CD8-positive, alpha-beta T cell (primary cell): ENCODE measurements at regions of chr9 and their contacts with region 1.

Region 1: DNA sequence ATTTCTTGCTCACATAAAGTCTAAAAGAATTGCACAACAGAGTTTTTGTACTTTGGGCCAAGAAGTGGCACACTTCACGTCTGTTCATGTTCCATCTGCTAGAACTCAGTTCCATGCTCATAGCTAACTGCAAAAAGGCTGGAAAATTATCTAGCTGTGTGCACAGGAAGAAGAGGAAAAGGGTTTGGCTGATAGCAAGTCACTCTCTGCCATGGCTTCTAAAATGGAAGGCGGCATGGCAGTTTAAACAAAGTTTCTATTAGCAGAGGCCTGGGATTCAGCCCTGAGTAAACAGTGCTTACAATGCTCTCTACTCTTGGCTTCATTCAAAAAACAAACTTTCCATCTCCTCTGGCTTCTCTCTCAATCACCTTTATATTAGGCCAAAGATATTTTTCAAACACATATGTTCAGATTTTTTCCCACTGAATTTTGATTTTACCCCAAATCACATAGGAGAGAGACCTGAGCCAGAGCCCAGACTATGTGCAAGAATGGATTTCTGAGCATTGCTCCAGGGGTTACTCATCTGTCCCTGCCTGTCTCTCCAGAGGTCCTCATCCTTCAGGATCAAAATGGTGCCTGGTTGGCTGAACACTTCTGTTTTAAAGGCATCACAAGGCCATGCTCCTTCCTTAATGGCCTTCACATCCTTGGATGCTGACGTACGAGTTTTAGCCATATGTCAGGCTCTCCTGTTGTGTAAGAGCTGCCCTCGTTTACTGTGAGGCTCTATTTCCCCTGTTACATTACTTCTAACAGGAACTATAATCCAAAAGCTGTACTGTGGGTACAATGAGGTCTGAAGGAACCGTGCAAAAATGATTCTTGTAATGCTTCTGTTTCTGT is 226.6 kb downstream of the SAXO1 start:
- DNase-seq: no peak
- ATAC-seq: no peak
- H3K4me3 ChIP-seq: no peak overlapping the region
- H3K4me3 Mint-ChIP-seq: no peak overlapping the region
- H3K27ac ChIP-seq: no peak overlapping the region
- H3K27ac Mint-ChIP-seq: no peak overlapping the region
- H3K4me1 ChIP-seq: no peaks in the 10 kb centered on the region
- H3K4me1 Mint-ChIP-seq: no peaks in the 10 kb centered on the region
- H3K27me3 ChIP-seq: no peaks in the 10 kb centered on the region
- H3K27me3 Mint-ChIP-seq: peaks cover under 1% of the 10 kb centered on the region
- CTCF ChIP-seq: no peak

Region 2: DNA sequence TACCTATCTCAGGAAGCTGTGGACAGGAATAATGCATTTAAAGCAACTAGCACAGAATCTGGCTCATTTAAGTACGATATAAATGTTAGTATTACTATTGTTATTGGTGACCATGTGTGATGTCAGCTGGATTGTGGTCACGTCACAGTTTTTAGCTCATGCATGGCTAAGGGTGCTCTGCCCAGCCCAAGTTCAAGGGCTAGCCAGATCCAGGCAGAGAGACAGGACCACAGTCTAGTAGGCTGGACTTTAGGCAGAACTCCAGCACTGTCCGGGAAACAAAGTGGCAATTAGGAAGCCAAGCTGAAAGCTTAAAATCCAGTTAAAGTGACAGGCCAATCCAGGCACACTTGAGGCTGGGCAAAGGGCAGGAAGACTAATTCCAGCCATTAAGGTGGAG is 58.9 kb before region 1 on chr9:
- CTCF ChIA-PET with region 1: no interaction called
- POLR2A ChIA-PET with region 1: no interaction called
- intact Hi-C with region 1: loop called in 1 of 2 experiments (anchors 10 kb)
- DNase-seq: no peak
- ATAC-seq: no peak
- H3K4me3 ChIP-seq: no peak overlapping the region
- H3K4me3 Mint-ChIP-seq: no peak overlapping the region
- H3K27ac ChIP-seq: no peak overlapping the region
- H3K27ac Mint-ChIP-seq: no peak overlapping the region
- H3K4me1 ChIP-seq: no peaks in the 10 kb centered on the region
- H3K4me1 Mint-ChIP-seq: no peaks in the 10 kb centered on the region
- H3K27me3 ChIP-seq: no peaks in the 10 kb centered on the region
- H3K27me3 Mint-ChIP-seq: peaks cover 3% of the 10 kb centered on the region
- CTCF ChIP-seq: no peak

Region 3: DNA sequence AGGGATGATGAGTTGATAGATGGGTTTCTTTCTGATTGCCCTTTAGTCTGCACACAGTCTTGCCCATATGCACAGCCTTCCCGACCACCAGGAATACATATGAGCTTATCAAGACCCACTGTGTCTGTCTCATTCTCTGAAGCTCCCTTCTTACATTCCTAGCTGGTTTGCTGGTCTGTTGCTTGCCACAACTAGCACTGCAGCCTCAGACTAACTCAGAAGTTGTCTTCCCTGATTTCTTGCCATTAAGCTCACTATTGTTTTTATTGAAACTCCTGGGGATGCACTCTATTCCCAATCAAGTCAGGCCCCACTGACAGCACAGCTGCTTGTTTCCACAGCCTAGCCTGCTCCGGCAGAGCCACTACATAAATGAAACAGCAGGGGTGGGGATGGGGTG is 129.1 kb after region 1 on chr9:
- CTCF ChIA-PET with region 1: no interaction called
- POLR2A ChIA-PET with region 1: no interaction called
- intact Hi-C with region 1: no loop called
- DNase-seq: no peak
- ATAC-seq: no peak
- H3K4me3 ChIP-seq: no peak overlapping the region
- H3K4me3 Mint-ChIP-seq: no peak overlapping the region
- H3K27ac ChIP-seq: no peak overlapping the region
- H3K27ac Mint-ChIP-seq: no peak overlapping the region
- H3K4me1 ChIP-seq: no peaks in the 10 kb centered on the region
- H3K4me1 Mint-ChIP-seq: no peaks in the 10 kb centered on the region
- H3K27me3 ChIP-seq: no peaks in the 10 kb centered on the region
- H3K27me3 Mint-ChIP-seq: no peaks in the 10 kb centered on the region
- CTCF ChIP-seq: no peak